ENCODE measurements at regions of chr2 and their contacts with region 1.

Region 1: DNA sequence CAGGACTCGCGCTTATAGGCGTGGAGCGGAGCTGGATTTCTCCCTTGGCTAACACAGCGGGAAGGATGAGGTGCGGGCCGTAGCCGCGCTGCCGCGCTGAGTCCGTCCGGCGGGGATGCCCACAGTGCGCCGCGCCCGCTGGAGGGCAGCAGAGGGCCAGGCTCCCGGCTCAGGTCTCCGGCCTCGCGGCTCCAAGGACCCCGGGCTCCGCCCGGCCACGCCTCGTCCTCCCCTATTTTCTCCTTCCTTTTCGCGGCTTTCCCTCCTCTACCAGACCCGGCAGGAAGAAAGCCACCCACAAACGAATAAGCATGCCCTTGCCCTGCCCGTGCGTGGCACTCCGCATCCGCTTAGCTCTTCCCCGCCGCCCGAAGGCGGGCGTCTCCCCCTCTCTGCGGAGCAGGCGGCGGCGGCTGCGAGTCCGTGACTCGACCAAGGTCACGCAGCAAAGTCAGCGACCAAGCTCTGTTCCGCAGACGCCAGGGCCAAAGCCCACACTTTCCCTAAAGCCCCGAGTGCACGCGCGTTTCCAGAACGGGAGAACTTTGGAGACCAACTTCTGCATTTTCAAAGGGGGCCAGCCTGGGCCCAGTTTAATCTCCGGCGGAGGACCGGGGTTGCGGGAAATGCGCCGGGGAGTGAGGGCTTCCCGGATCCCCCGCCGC is 48.6 kb downstream of the KCNIP3 start:
- DNase-seq: peak; percentile 87 to 90
- ATAC-seq: peak; percentile 91 to 97 (median 94)
- H3K4me3 ChIP-seq: peak overlapping the region; percentile 80
- H3K27ac ChIP-seq: no peak overlapping the region
- H3K4me1 ChIP-seq: peaks cover 6% of the 10 kb centered on the region
- H3K27me3 ChIP-seq: peaks cover 0 to 28% (median 0%) of the 10 kb centered on the region in 3 donors
- CTCF ChIP-seq: peak; percentile 89

Region 2: GRCh38 chr2:95389245-95390119 is 43.8 kb after region 1 on chr2:
- intact Hi-C with region 1: loop called in 1 of 2 experiments (anchors 5 kb)
- DNase-seq: peak; percentile 65 to 78
- ATAC-seq: peak; percentile 71 to 86 (median 76)
- H3K4me3 ChIP-seq: peak overlapping the region; percentile 30
- H3K27ac ChIP-seq: no peak overlapping the region
- H3K4me1 ChIP-seq: no peaks in the 10 kb centered on the region
- H3K27me3 ChIP-seq: peaks cover 0 to 8% (median 4%) of the 10 kb centered on the region in 3 donors
- CTCF ChIP-seq: peak; percentile 73

Region 3: DNA sequence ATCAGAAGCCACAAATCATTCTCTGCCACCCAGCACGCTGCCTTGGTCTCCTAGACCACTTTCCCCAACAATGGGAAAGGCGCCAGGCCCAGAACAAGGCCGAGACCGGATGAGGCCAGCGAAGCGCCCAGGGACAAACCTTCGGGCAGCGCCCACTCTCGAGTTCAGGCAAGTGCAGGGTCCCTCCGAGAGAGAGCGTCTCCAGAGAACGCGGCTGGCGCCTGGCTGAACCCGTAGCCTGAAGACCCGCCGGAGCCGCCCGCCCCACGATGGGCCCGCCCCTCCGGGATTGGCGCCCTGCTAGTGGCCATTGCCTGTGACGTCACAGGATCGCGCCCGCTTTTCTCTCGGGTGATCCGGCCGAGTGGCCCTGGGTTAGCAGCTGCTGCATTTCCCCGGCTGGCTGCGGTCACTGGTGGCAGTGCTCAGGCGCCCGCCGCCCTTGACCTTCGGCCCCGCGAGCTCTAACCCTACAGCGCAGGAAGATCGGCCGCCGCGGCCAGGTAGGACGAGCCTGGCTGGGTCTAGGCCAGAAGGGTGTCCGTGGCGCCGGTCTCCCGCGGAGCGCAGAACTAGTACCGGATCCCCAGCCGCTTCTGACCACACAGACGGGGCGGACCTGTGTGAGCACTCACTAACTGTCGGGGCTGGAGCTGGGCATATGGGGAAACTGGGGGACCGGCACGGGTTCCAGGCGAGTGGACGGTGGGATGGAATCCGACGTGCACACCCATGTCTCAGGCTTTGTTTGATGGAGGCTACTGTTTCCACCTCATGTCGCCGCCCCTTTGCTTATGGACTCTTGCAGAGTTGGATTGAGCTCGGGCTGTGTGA is 56.9 kb after region 1 on chr2 and contains the start of gene FAHD2A:
- intact Hi-C with region 1: loop called in 1 of 2 experiments (anchors 5 kb)
- DNase-seq: peak; percentile 98
- ATAC-seq: peak; percentile 99 to 100 (median 99)
- H3K4me3 ChIP-seq: peak within 1 kb of the TSS; percentile 97
- H3K27ac ChIP-seq: peak within 1 kb of the TSS; percentile 93
- H3K4me1 ChIP-seq: peaks cover 12% of the 10 kb centered on the region
- H3K27me3 ChIP-seq: no peaks in the 10 kb centered on the region
- CTCF ChIP-seq: no peak
- total RNA-seq, gene FAHD2A: 21.9 to 39.0 (median 29.8) TPM

Measured in psoas muscle (tissue), 8 donors.